Activated CD8-positive, alpha-beta T cell treated with anti-CD3 and anti-CD28 coated beads, Interleukin-2, amount 10 ng/mL, durations not matched to agents 7 days and 5 days (primary cell): ENCODE measurements at regions of chr1 and their contacts with region 1.

Region 1: DNA sequence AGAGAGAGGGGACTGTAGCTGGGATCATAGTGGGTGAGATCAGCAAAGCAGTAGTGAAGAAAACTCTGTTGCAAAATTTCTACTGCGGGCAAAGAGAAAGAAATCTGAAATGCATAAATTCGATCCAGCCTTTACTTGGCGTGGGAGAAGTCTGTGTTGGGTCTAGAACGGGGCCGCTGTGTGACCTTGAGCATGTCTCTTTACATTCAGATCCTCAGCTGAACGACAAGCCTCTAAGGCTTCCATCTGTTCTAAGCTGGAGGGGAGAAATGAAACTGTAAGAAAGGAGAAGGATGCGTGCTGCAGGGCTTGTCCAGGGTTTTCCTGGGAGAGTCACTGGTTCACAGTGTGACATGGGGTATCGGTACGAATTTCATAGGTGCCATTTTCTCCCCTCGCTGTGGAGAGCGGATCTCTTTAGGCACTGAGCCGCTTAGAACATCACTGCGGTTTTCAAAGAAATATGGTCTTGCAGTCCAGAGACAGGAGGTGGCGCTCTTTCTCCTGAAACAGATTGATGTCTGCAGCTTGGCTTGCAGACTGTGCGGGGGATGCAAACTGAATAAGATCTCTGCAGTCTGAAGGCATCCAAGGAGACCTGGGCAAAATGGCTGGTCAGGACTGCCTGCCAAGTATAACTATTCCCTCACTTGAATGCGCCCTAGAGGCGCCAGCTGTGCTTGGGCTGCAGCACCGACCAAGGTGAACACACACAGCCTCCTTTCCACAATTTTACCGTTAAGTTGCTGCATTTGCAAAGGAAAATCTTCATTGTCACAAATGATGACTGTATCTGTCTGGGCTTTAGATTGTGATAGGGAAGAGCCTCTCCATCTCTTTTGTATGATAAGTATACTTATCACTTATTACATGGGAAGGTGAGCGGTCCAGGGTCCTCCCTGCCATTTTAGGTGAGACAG is 104.1 kb downstream of the XCL2 start:
- DNase-seq: peak; percentile 96
- ATAC-seq: peak; percentile 86
- H3K4me3 Mint-ChIP-seq: peak overlapping the region; percentile 47
- H3K27ac Mint-ChIP-seq: peak overlapping the region; percentile 82
- H3K4me1 Mint-ChIP-seq: peaks cover 65% of the 10 kb centered on the region
- H3K27me3 Mint-ChIP-seq: no peaks in the 10 kb centered on the region

Region 2: GRCh38 chr1:168304865-168305264 is 134.9 kb before region 1 on chr1:
- CTCF ChIA-PET with region 1: no interaction called
- POLR2A ChIA-PET with region 1: no interaction called
- DNase-seq: no peak
- ATAC-seq: no peak
- H3K4me3 Mint-ChIP-seq: no peak overlapping the region
- H3K27ac Mint-ChIP-seq: no peak overlapping the region
- H3K4me1 Mint-ChIP-seq: no peaks in the 10 kb centered on the region
- H3K27me3 Mint-ChIP-seq: no peaks in the 10 kb centered on the region

Region 3: DNA sequence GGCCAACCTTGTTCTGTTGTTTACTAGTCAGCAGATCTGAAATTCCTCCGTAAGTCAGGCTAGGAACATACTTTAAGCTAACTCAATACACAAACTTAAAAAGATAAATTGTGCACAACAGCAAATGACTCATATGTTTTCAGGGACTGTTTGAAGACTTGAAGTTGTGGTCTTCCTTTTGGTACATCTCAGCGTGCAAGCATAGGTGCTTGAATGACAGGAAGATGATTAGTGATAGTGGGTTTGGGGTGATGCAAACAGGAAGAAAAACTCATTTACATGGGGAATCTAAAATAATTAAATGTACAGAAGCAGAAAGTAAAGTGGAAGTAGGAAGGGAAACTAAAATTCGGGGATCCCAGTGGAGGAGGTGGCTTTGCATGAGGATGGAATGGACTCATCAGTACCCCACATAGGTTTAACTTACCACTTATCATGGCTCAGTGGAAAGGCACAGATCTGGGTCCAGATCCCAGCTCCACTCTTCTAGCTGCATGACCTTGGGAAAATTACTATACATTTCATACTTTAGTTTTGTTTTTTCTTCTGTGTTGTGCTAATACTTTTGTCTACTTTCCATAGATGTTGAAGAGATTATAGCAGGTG is 18.2 kb before region 1 on chr1:
- CTCF ChIA-PET with region 1: interaction called, 40 read pairs
- POLR2A ChIA-PET with region 1: interaction called, 3 read pairs
- DNase-seq: peak; percentile 52
- ATAC-seq: peak; percentile 89
- H3K4me3 Mint-ChIP-seq: peak overlapping the region; percentile 29
- H3K27ac Mint-ChIP-seq: peak overlapping the region; percentile 89
- H3K4me1 Mint-ChIP-seq: peaks cover 34% of the 10 kb centered on the region
- H3K27me3 Mint-ChIP-seq: no peaks in the 10 kb centered on the region

Region 4: DNA sequence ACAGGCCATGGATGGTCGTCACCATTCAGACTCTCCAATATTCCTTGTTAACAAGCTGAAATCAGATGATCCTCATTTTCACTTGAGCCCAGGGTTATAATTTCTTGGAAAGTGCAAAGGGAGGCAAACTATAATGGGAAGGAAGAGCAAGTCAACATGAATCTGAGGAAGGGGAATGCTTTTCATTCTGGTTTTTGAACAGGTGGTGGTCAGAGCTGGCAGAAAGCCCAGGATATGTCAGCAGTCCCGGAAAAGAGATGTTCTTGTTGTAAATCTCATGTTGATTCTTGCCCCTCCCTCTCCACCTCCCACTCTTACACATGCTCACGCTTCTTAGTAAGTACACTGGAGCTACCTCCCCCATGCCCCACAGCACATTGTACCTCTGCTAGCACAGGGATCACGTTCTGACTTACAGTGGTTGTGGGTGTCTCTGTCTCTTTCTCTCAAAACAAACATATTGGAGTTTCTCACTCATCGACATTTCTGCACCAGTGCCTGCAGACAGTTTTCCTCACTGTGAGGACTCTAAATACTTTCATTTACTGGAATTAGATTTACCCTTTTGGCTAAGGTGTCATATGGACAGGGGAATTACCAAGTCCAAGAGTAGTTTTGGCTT is 26.5 kb after region 1 on chr1:
- CTCF ChIA-PET with region 1: interaction called, 143 read pairs
- POLR2A ChIA-PET with region 1: interaction called, 27 read pairs
- DNase-seq: peak; percentile 71
- ATAC-seq: peak; percentile 61
- H3K4me3 Mint-ChIP-seq: peak overlapping the region; percentile 3
- H3K27ac Mint-ChIP-seq: peak overlapping the region; percentile 84
- H3K4me1 Mint-ChIP-seq: peaks cover 77% of the 10 kb centered on the region
- H3K27me3 Mint-ChIP-seq: no peaks in the 10 kb centered on the region

Region 5: GRCh38 chr1:168520052-168520751 is 80.5 kb after region 1 on chr1:
- CTCF ChIA-PET with region 1: interaction called, 11 read pairs
- POLR2A ChIA-PET with region 1: interaction called, 17 read pairs
- DNase-seq: peak; percentile 85
- ATAC-seq: peak; percentile 89
- H3K4me3 Mint-ChIP-seq: peak overlapping the region; percentile 80
- H3K27ac Mint-ChIP-seq: peak overlapping the region; percentile 91
- H3K4me1 Mint-ChIP-seq: peaks cover 79% of the 10 kb centered on the region
- H3K27me3 Mint-ChIP-seq: no peaks in the 10 kb centered on the region

Region 6: DNA sequence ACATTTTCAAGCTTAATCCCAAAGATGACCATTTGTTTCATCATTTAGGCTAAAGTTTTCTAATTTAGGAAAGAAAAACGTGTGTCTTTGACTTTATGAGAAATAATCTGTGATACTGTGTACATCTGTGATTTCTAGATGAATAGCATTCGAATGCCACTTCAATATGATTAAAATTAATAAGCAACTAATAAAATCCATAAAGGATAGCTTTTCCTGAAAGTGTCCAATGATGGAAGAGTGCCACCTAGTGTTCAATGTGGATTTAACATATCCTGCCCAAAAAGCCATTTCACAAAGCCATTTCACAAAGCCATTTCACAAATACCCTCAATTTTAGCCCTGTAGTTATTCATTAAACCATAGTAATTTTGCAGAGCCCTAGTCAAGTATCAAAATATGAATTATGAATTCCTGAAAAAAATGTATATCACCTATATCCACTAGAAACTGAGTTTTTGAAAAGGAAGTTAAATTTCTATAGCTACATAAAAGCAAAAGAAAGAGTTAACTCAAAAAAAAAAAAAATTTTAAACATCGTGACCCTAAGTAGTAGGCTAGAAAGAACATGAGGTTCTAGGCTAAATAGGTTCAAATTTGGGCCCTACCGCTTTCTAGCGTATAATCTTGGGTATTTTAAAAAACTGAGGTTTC is 908.8 kb after region 1 on chr1:
- CTCF ChIA-PET with region 1: interaction called, 30 read pairs
- POLR2A ChIA-PET with region 1: no interaction called
- DNase-seq: peak; percentile 46
- ATAC-seq: no peak
- H3K4me3 Mint-ChIP-seq: no peak overlapping the region
- H3K27ac Mint-ChIP-seq: no peak overlapping the region
- H3K4me1 Mint-ChIP-seq: peaks cover 18% of the 10 kb centered on the region
- H3K27me3 Mint-ChIP-seq: no peaks in the 10 kb centered on the region